ENCODE measurements at regions of chr1 and their contacts with region 1.

Region 1: GRCh38 chr1:204806943-204807687 is 63.5 kb upstream of the NFASC start:
- DNase-seq: peak; percentile 89
- H3K4me3 Mint-ChIP-seq: peak overlapping the region; percentile 78
- H3K27ac Mint-ChIP-seq: peak overlapping the region; percentile 3
- H3K4me1 Mint-ChIP-seq: peaks cover 18% of the 10 kb centered on the region
- H3K27me3 Mint-ChIP-seq: peaks cover 30% of the 10 kb centered on the region

Region 2: GRCh38 chr1:204431310-204432165 is 375.6 kb before region 1 on chr1:
- CTCF ChIA-PET with region 1: interaction called, 35 read pairs
- DNase-seq: peak; percentile 87
- H3K4me3 Mint-ChIP-seq: no peak overlapping the region
- H3K27ac Mint-ChIP-seq: no peak overlapping the region
- H3K4me1 Mint-ChIP-seq: no peaks in the 10 kb centered on the region
- H3K27me3 Mint-ChIP-seq: no peaks in the 10 kb centered on the region

Region 3: GRCh38 chr1:204544321-204544720 is 262.8 kb before region 1 on chr1:
- CTCF ChIA-PET with region 1: interaction called, 10 read pairs
- DNase-seq: no peak
- H3K4me3 Mint-ChIP-seq: peak overlapping the region; percentile 24
- H3K27ac Mint-ChIP-seq: peak overlapping the region; percentile 92
- H3K4me1 Mint-ChIP-seq: peaks cover 59% of the 10 kb centered on the region
- H3K27me3 Mint-ChIP-seq: no peaks in the 10 kb centered on the region

Region 4: DNA sequence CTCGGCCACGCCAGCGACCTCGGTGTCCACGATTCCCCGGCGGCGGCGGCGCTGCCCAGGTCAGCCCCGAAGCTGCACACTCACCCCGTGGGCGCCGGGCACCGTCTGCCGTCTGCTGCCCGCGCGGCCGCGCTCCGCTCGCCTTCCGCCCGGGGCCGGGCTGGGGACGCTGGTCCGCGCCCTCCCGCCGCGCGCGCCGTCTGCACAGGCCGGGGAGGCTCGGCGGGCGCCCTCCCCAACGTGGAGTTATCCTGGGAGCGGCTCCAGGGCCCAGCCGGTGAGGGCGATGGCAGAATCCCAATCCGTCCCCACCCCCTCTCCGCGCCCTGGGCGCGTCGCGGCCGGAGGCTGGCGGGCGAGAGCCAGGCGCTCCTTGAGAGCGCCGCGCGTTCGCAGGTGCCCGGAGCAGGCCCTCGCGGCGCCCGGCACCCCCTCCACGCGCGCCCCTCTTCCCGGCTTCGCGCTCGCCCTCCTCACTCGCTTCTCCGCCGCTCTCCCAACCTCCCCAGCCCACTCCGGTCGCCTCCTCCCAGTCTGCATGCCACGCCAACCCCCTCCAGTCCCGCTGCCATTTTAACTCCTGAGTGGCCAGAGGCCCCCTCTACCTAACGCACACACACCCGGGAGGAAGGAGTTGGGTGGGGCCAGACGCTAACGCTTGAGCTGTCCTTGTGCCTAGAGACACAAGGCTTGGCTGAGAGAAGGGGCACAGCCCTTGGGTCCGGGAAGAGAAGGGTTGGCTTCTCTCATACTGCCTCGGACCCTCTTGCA is 121.7 kb before region 1 on chr1 and contains the start of gene LRRN2:
- CTCF ChIA-PET with region 1: interaction called, 13 read pairs
- DNase-seq: no peak
- H3K4me3 Mint-ChIP-seq: peak within 1 kb of the TSS; percentile 61
- H3K27ac Mint-ChIP-seq: no peak within 1 kb of the TSS
- H3K4me1 Mint-ChIP-seq: peaks cover 12% of the 10 kb centered on the region
- H3K27me3 Mint-ChIP-seq: peaks cover 77% of the 10 kb centered on the region

Region 5: GRCh38 chr1:204791453-204792353 is 15.4 kb before region 1 on chr1:
- CTCF ChIA-PET with region 1: interaction called, 41 read pairs
- DNase-seq: peak; percentile 90
- H3K4me3 Mint-ChIP-seq: no peak overlapping the region
- H3K27ac Mint-ChIP-seq: no peak overlapping the region
- H3K4me1 Mint-ChIP-seq: peaks cover 6% of the 10 kb centered on the region
- H3K27me3 Mint-ChIP-seq: peaks cover 49% of the 10 kb centered on the region

Region 6: DNA sequence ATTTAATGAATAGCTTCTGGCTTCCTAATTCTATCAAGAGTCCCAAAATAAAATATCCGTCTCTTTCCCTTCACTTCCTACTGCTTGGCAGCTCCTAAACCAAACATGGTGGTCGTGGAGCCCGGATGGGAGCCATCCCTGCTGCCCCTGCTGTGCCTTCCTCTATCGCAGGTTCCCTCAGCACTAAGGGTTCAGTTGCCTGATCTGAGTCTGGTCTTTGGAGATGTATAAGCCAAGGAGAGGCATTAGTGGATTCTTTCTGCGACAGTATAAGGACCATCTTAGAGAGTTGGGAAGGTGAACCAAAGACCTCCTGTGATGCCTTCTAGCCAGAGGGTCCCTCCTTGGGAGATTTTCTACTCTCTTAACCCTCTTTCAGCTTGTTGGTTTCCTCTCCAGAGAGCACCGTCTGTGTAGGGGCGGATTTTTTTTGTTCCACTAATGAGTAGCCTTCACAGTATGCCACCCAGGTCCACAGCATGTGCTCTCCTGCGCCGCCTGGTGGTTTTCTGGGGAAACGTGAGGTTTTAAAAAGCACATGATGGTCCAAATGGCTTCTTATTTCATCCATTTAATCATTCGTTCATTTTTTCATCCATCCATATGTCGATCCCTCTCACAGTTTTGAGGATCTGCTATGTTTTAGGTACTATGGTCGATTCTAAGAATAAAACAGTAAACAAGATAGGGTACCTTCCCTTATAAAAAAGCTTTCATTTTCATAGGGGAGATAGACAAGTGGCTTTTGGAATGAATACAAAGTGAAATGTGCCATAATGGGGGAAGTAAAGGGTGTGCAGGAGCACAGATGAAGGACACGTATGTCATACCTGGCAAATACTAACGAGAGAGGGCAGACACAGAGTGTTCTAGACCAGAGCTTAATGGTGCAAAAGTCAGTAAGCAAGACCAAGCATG is 134.6 kb after region 1 on chr1:
- CTCF ChIA-PET with region 1: interaction called, 14 read pairs
- DNase-seq: peak; percentile 72
- H3K4me3 Mint-ChIP-seq: no peak overlapping the region
- H3K27ac Mint-ChIP-seq: no peak overlapping the region
- H3K4me1 Mint-ChIP-seq: no peaks in the 10 kb centered on the region
- H3K27me3 Mint-ChIP-seq: peaks cover 27% of the 10 kb centered on the region

Region 7: GRCh38 chr1:205172729-205173366 is 365.7 kb after region 1 on chr1:
- CTCF ChIA-PET with region 1: no interaction called
- DNase-seq: no peak
- H3K4me3 Mint-ChIP-seq: no peak overlapping the region
- H3K27ac Mint-ChIP-seq: no peak overlapping the region
- H3K4me1 Mint-ChIP-seq: peaks cover 29% of the 10 kb centered on the region
- H3K27me3 Mint-ChIP-seq: no peaks in the 10 kb centered on the region